ENCODE measurements at regions of chr6 and their contacts with region 1.

Region 1: DNA sequence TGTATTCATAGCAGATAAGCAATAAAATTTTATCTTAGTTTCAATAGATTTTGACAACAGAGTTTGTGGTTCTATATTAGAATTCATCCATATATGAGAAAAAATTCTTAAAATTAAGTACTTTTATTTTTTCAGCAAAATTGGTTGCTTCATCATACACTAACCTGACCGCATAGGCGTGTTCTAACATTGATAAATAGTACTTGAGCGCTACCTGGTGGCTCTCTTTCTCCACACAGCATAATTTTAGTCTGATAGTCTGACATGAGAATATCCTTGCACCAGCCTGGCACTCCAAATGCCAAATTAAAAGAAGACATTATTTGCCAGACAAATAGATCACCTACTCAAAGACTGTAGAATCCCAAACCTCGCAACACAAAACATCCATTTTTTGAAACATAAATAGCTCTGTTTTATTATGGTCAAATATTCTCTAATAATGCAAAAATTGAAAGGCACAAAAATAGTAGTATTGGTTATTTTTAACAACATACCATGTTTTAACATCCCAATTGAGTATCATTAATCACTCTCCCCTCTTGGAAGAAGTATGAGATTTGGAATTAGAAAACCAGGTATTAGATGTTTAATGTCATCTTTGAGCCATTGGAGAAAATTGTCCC is 33.0 kb upstream of the FILIP1 start:
- DNase-seq: peak; percentile 38
- ATAC-seq: peak; percentile 75
- H3K4me3 ChIP-seq: no peak overlapping the region
- H3K27ac ChIP-seq: no peak overlapping the region; the same call in 1 of the 2 replicates
- H3K4me1 ChIP-seq: peaks cover 22% of the 10 kb centered on the region
- H3K27me3 ChIP-seq: no peaks in the 10 kb centered on the region
- CTCF ChIP-seq: peak; percentile 71; the same call in 1 of the 2 replicates

Region 2: GRCh38 chr6:75296811-75297779 is 229.5 kb before region 1 on chr6:
- CTCF ChIA-PET with region 1: interaction called, 5 read pairs
- POLR2A ChIA-PET with region 1: no interaction called
- in situ Hi-C with region 1: no loop called
- intact Hi-C with region 1: loop called (anchors 1 kb)
- DNase-seq: peak; percentile 51
- ATAC-seq: peak; percentile 83
- H3K4me3 ChIP-seq: no peak overlapping the region
- H3K27ac ChIP-seq: peak overlapping the region; percentile 54; the same call in 1 of the 2 replicates
- H3K4me1 ChIP-seq: no peaks in the 10 kb centered on the region
- H3K27me3 ChIP-seq: no peaks in the 10 kb centered on the region
- CTCF ChIP-seq: peak; percentile 69; the same call in 1 of the 2 replicates

Region 3: DNA sequence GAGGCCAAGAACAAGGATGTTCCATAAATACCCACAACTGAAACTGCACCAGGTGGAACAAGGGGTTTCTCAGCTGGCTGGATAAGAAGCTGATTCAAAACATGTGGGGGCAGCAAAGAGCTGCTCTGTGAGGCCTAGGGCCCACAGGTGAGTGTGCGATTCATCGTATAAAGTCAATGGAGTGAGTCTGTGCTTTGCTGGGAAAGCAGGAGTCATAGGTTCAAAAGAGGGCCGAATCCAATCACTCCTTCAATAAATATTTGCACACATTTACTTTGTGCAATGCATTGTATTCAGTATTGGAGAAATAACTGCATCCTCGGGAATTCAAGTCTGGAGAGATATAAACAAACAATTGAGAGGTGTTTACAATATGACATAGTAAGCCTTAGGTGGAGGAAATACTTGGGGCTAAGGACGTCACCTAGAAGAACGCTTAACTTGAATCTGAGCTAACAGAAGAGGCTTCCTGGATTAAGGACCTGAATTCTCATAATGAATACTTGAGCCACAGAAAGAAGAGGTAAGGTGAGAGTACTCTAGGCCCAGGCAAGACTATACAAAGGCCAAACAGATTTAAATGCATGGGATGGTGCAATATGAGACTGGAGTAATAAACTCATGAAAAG is 158.3 kb before region 1 on chr6:
- CTCF ChIA-PET with region 1: no interaction called
- POLR2A ChIA-PET with region 1: no interaction called
- in situ Hi-C with region 1: no loop called
- intact Hi-C with region 1: loop called (anchors 1 kb)
- DNase-seq: no peak
- ATAC-seq: peak; percentile 89
- H3K4me3 ChIP-seq: no peak overlapping the region
- H3K27ac ChIP-seq: peak overlapping the region; percentile 46
- H3K4me1 ChIP-seq: peaks cover 5% of the 10 kb centered on the region; the same call in 1 of the 2 replicates
- H3K27me3 ChIP-seq: no peaks in the 10 kb centered on the region
- CTCF ChIP-seq: peak; percentile 66

Measured in Panc1 (cell line).